Activated T-helper 1 cell treated with anti-CD3 and anti-CD28 coated beads, Interleukin-12 subunit alpha, Interleukin-12 subunit beta, Interleukin-2, Interleukin-4 antibody, amounts not matched to agents 30 ng/mL and 10 ng/mL and 1 ng/mL, durations not matched to agents 14 hours and 24 hours and 36 hours (primary cell): ENCODE measurements at regions of chr1 and their contacts with region 1.

Region 1: DNA sequence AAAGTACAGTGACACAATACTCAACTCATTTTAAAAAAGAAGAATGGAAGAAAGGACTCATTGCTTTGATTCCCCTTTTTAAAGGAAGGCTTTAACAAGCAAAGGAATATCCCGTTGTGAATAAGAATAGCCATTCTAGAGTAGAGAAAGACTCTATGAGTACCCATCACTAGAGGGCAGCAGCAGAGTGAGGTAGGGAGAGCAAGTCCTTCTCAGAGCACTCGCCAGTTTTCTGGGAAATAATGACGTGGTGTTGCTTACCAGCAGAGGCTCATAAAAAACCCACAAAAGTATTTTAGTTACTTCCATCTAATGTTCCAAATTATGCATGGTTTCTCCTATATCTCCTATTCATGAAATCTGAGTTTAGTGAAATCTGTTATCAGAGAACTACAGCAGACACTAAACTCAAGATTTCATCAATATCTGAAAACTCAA is 74.6 kb downstream of the USP24 start:
- DNase-seq: peak; percentile 66
- H3K4me3 Mint-ChIP-seq: no peak overlapping the region
- H3K27ac Mint-ChIP-seq: peak overlapping the region; percentile 51
- H3K4me1 Mint-ChIP-seq: peaks cover 23% of the 10 kb centered on the region
- H3K27me3 Mint-ChIP-seq: no peaks in the 10 kb centered on the region

Region 2: DNA sequence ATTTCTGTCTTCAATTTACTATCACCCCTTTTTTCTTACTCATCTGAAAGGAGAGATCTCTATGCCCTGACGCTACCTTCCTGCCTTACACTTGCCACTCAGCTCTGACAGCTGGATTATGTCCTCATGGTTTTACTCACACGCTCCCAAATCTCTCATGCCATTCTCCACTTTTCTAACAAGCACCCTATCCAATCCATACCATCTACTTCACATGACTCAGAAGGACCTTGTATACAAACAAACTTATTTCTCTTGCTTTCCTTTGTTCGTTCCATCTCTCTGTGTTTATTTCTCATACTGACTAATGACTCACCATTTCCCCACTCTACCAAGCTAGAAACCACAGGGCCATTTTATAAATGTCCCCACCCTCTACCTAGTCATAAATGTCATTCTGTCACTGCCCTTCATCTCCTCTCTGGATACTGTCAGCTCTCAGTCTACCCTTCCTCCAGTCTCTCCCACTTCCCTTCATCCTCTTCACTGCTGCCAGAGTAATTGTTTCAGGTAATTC is 12.7 kb before region 1 on chr1:
- intact Hi-C with region 1: loop called (anchors 1 kb)
- DNase-seq: no peak
- H3K4me3 Mint-ChIP-seq: peak overlapping the region; percentile 8
- H3K27ac Mint-ChIP-seq: peak overlapping the region; percentile 69
- H3K4me1 Mint-ChIP-seq: peaks cover 31% of the 10 kb centered on the region
- H3K27me3 Mint-ChIP-seq: no peaks in the 10 kb centered on the region

Region 3: GRCh38 chr1:55150880-55151588 is 10.5 kb after region 1 on chr1:
- intact Hi-C with region 1: loop called (anchors 1 kb)
- DNase-seq: no peak
- H3K4me3 Mint-ChIP-seq: peak overlapping the region; percentile 62
- H3K27ac Mint-ChIP-seq: peak overlapping the region; percentile 79
- H3K4me1 Mint-ChIP-seq: peaks cover 29% of the 10 kb centered on the region
- H3K27me3 Mint-ChIP-seq: no peaks in the 10 kb centered on the region

Region 4: GRCh38 chr1:55277377-55278130 is 137.0 kb after region 1 on chr1:
- intact Hi-C with region 1: loop called (anchors 1 kb)
- DNase-seq: peak; percentile 66
- H3K4me3 Mint-ChIP-seq: no peak overlapping the region
- H3K27ac Mint-ChIP-seq: peak overlapping the region; percentile 32
- H3K4me1 Mint-ChIP-seq: peaks cover 26% of the 10 kb centered on the region
- H3K27me3 Mint-ChIP-seq: peaks cover 10% of the 10 kb centered on the region

Region 5: DNA sequence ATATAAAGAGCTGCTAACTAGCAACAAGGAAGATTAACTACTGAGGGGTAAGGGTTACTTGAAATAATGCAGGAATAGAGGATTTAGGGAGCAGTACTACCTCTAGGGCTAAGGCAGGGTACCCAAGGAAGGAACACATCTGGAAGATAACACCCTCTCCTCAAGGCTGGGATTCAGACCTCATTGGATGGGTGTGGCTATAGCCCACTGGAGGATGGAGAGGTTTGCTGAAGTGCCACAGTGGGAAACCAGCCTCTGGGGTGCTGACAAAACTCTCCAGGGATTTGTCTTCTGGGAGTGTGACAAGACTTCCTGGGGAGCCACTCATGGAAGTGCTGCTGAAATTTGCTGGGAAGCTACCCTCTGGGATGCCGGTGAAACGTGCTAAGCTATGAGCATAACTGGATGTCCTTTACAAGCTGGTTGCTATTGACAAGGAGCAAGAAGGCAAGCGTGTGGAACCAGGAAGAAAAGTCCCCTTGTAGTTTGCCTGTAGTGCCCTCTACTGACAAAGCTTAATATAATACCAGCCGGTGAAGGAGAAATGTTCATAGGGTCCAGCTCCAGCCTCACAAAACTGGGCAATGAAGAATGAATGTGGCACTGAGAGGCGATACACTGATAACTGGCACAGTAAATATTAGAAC is 197.4 kb after region 1 on chr1:
- intact Hi-C with region 1: loop called (anchors 1 kb)
- DNase-seq: peak; percentile 2
- H3K4me3 Mint-ChIP-seq: no peak overlapping the region
- H3K27ac Mint-ChIP-seq: no peak overlapping the region
- H3K4me1 Mint-ChIP-seq: peaks cover 6% of the 10 kb centered on the region
- H3K27me3 Mint-ChIP-seq: peaks cover 2% of the 10 kb centered on the region

Region 6: GRCh38 chr1:55399346-55399745 is 258.8 kb after region 1 on chr1:
- intact Hi-C with region 1: loop called (anchors 5 kb)
- DNase-seq: no peak
- H3K4me3 Mint-ChIP-seq: no peak overlapping the region
- H3K27ac Mint-ChIP-seq: no peak overlapping the region
- H3K4me1 Mint-ChIP-seq: no peaks in the 10 kb centered on the region
- H3K27me3 Mint-ChIP-seq: peaks cover 8% of the 10 kb centered on the region

Region 7: DNA sequence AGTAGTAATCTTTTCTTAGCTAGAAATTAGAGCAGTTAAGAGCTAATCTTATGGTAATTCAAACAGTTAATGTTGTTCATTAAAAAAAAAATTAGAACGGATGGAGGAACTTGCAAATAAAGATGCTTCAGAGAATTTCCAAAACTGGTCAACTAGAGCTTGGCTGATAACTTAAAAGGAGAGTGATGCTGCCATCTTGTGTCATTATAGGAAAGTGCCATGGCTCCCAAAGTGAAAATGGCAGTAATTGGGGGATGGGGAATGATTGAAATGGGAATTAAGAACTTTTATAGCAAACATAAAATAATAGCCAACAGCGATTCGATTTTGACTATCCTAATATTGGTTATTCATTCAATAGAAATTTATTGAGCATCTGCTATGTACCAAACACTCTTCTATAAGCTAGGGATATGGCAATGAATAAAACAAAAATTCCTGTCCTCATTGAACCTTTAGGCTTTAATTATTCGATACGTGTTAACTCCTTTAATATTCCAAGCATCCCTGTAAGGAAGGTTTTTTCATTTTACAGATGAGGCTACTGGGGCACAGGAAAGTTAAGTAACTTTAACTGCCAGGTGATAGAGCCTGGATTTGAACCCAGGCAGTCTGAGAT is 1444.5 kb after region 1 on chr1:
- intact Hi-C with region 1: loop called (anchors 10 kb)
- DNase-seq: no peak
- H3K4me3 Mint-ChIP-seq: no peak overlapping the region
- H3K27ac Mint-ChIP-seq: no peak overlapping the region
- H3K4me1 Mint-ChIP-seq: no peaks in the 10 kb centered on the region
- H3K27me3 Mint-ChIP-seq: peaks cover 9% of the 10 kb centered on the region